K562 (cell line): ENCODE measurements at regions of chr7 and their contacts with region 1.

Region 1: DNA sequence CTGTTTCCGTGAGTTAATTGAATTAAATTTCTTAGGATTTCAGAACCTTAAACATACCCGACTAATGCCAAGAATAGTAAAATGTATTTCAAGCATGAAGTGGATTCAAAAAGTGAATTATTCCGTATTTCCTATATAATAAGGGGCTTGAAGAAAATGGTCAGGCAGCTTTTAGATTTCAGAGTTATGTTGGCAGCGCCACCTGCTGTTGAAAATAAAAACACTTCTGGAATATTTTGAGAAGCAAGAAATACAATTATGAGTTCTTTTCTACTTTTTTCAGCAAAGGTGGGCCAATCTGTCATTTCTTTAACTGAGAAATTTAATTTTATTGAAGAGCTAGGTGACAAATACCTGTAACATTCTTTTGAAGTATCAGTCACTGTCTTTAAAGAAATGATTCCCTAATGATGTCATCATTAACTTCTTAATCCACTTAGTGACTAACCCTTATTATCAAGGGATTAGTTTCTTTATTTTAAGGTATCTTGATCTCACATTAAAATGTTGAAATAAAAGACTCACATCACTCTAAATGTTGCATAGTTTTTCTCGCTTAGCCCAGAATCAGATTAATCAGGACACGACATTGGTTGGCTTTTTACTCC is 36.6 kb upstream of the AGR3 start:
- DNase-seq: peak; percentile 23 to 59 (median 30)
- ATAC-seq: 0 out of 3 replicates have a peak, but pooled peaks have one; percentile 29
- H3K4me3 ChIP-seq: no peak overlapping the region
- H3K27ac ChIP-seq: no peak overlapping the region
- H3K4me1 ChIP-seq: no peaks in the 10 kb centered on the region
- H3K27me3 ChIP-seq: no peaks in the 10 kb centered on the region
- CTCF ChIP-seq: peak; percentile 40 to 72 (median 46); a peak in 5 of 6 replicates
- EP300 ChIP-seq: no peak
- POLR2A ChIP-seq: no peak
- RAD21 ChIP-seq: peak; percentile 82 to 88

Region 2: GRCh38 chr7:16078076-16078952 is 840.1 kb before region 1 on chr7:
- CTCF ChIA-PET with region 1: no interaction called
- POLR2A ChIA-PET with region 1: no interaction called
- in situ Hi-C with region 1: loop called (anchors 10 kb)
- intact Hi-C with region 1: loop called (anchors 5 kb)
- DNase-seq: peak; percentile 35 to 83 (median 40)
- ATAC-seq: peak; percentile 94
- H3K4me3 ChIP-seq: no peak overlapping the region
- H3K27ac ChIP-seq: no peak overlapping the region
- H3K4me1 ChIP-seq: no peaks in the 10 kb centered on the region; a peak in 1 of 5 replicates
- H3K27me3 ChIP-seq: no peaks in the 10 kb centered on the region
- CTCF ChIP-seq: peak; percentile 60 to 77 (median 74); a peak in 5 of 6 replicates
- EP300 ChIP-seq: no peak
- POLR2A ChIP-seq: no peak
- RAD21 ChIP-seq: peak; percentile 92 to 95

Region 3: DNA sequence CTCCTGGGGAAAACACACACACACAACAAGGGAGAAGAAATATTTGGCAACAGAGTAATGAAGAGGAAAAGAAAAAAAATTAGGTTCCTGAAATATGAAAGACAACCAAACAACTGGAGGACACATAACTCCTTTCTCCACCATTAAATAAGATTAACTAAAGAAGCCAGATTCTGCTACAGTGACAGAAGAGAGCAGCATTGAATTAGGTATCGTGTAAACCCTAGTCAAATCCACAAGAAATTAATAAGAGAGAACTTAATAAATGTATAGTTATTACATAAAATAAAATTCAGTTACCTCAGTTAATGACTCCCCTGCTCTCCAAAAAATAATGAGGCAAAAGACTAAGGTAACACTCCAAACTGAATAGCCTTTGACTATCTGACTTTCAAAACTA is 803.8 kb before region 1 on chr7:
- CTCF ChIA-PET with region 1: no interaction called
- POLR2A ChIA-PET with region 1: no interaction called
- in situ Hi-C with region 1: no loop called
- intact Hi-C with region 1: loop called (anchors 10 kb)
- DNase-seq: peak in 2 of 4 experiments; percentile 23 to 58
- ATAC-seq: peak; percentile 83
- H3K4me3 ChIP-seq: no peak overlapping the region
- H3K27ac ChIP-seq: no peak overlapping the region; the same call in 2 of the 3 replicates
- H3K4me1 ChIP-seq: no peaks in the 10 kb centered on the region
- H3K27me3 ChIP-seq: no peaks in the 10 kb centered on the region
- CTCF ChIP-seq: peak in 2 of 3 experiments; percentile 42 to 60; a peak in 3 of 6 replicates
- EP300 ChIP-seq: no peak
- POLR2A ChIP-seq: no peak
- RAD21 ChIP-seq: peak; percentile 51 to 78

Region 4: DNA sequence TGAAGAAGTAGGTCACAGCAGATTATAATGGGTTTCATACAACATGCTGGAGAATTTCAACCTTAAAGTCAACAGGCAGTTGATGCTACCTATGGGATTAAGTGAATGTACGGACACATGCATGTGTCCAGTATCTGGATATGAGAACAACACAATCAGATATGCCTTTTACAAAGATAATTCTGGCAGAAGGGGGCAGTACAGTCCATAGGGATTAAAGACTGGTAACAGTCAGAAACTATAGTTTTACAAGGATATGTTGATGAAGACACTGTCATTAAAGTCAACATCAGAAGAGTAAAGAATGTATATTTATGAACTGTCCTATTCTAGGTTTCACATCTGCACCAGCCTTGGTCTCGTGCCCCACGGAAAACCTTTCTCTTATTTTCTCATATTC is 314.3 kb before region 1 on chr7:
- CTCF ChIA-PET with region 1: no interaction called
- POLR2A ChIA-PET with region 1: no interaction called
- in situ Hi-C with region 1: no loop called
- intact Hi-C with region 1: loop called (anchors 5 kb)
- DNase-seq: no peak
- ATAC-seq: peak; percentile 49; the same call in 1 of the 3 replicates
- H3K4me3 ChIP-seq: no peak overlapping the region
- H3K27ac ChIP-seq: no peak overlapping the region
- H3K4me1 ChIP-seq: no peaks in the 10 kb centered on the region
- H3K27me3 ChIP-seq: no peaks in the 10 kb centered on the region
- CTCF ChIP-seq: peak in 1 of 3 experiments; percentile 43; a peak in 2 of 6 replicates
- EP300 ChIP-seq: no peak
- POLR2A ChIP-seq: no peak
- RAD21 ChIP-seq: peak in 1 of 2 experiments; percentile 56; a peak in 2 of 4 replicates

Region 5: DNA sequence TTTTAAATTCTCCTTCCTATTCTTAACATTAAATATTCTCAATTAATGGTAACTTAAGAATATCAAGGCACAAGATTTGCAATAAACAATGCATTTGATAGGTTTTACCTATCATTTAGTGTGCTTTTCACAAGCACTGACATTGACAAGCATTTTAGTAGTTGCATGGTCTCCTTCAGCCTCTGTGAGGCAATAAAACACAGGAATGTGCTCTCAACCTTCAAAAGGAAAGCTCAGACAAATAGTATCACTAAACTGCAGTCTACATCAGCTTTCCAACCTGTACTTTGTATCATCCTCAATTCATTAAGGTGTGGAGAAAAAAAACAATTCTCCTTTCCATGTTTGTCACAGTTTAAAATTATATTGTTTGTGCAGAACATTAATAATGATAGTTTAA is 216.0 kb before region 1 on chr7:
- CTCF ChIA-PET with region 1: interaction called, 32 read pairs
- POLR2A ChIA-PET with region 1: no interaction called
- in situ Hi-C with region 1: loop called (anchors 5 kb)
- intact Hi-C with region 1: loop called (anchors 2 kb)
- DNase-seq: no peak
- ATAC-seq: peak; percentile 62
- H3K4me3 ChIP-seq: no peak overlapping the region
- H3K27ac ChIP-seq: no peak overlapping the region
- H3K4me1 ChIP-seq: no peaks in the 10 kb centered on the region
- H3K27me3 ChIP-seq: no peaks in the 10 kb centered on the region
- CTCF ChIP-seq: peak in 1 of 3 experiments; percentile 33; a peak in 2 of 6 replicates
- EP300 ChIP-seq: no peak
- POLR2A ChIP-seq: no peak
- RAD21 ChIP-seq: peak; percentile 21 to 62; a peak in 3 of 4 replicates